ENCODE measurements at regions of chr11 and their contacts with region 1.

Region 1: DNA sequence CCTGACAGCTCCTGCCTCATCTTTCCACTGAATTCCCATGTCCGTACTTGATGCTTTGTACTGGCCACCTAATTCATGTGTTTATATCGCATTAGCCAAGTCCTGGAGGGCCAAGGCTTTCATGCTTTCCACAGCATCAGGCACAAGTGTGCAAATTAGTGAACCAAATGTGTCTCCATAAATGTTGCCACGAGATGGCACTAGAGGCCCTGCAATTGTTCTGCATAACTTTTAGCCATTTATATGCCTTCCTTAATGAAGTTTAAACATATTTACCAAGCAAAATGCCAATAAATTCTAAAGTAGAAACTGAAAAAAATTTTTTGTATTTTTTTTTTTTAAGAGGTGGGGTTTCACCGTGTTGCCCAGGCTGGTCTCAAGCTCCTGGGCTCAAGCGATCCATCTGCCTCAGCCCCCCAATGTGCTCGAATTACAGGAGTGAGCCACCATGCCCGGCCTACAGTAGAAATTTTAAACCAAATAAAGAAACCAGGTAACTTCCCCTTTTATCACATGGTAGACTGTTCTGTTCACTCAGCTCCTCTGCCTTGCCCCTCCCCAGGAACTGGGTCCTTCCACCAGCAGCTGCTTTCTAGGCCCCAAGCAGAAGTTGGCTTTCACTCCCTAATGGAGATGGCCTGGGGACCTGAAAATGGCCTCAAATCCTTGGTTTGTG is 20.8 kb upstream of the IL18BP start:
- H3K4me3 ChIP-seq: no peak overlapping the region
- H3K27ac ChIP-seq: no peak overlapping the region
- H3K4me1 ChIP-seq: no peaks in the 10 kb centered on the region
- CTCF ChIP-seq: 0 out of 2 replicates have a peak, but pooled peaks have one; percentile 33

Region 2: DNA sequence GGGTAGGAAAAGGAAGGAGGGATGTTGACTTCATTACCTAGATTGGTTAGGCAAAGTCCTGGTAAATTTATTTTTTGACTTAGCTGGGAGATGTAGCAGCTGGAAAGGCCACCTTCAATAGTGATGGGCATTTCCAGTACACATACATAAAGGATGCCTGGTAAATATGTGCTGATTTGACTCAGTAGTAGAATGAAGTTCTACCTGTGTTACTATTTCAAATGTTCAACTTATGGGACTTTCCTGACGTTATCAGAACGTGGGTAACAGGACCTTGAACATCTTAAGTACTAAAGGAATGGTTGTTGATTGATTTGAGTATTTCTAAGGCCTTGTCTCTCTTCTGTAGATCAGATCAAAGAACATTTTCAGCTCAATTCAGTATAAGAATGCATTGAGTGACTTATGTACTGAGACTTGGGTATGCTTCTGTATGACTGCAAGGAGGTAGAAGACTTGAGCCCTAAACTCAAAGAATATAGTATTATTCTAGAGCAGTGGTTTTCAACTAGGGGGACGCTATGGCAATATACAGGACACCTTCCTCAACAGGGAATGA is 21.9 kb before region 1 on chr11:
- CTCF ChIA-PET with region 1: interaction called, 12 read pairs
- POLR2A ChIA-PET with region 1: no interaction called
- H3K4me3 ChIP-seq: no peak overlapping the region
- H3K27ac ChIP-seq: no peak overlapping the region
- H3K4me1 ChIP-seq: no peaks in the 10 kb centered on the region
- CTCF ChIP-seq: no peak

Region 3: DNA sequence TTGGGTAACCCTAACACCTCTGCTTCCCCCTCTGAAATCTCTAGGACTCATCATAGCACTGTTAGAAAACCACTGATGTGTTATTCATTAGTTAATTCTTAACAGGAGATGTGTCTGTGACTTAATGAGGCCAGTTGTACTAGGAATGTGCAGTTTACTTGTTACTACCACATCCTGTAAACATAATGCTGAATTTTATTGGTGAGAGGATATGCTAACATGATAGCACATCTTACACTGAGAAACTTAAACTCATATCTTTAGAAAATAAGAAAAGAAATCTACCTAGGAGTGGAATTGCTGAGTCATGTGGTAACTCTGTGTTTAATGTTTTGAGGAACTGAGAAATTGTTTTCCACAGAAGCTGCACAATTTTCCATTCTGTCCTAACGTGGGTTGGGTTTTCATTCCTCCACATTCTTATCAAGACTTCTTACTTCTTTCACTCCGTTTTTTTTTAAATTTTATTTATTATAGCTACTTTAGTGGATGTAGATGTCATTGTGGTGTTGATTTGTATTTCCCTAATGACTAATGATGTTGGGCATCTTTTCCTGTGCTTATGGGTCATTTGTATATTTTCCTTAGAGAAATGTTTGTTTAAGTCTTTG is 15.3 kb before region 1 on chr11:
- CTCF ChIA-PET with region 1: interaction called, 39 read pairs
- POLR2A ChIA-PET with region 1: no interaction called
- H3K4me3 ChIP-seq: no peak overlapping the region
- H3K27ac ChIP-seq: no peak overlapping the region
- H3K4me1 ChIP-seq: no peaks in the 10 kb centered on the region
- CTCF ChIP-seq: no peak

Region 4: DNA sequence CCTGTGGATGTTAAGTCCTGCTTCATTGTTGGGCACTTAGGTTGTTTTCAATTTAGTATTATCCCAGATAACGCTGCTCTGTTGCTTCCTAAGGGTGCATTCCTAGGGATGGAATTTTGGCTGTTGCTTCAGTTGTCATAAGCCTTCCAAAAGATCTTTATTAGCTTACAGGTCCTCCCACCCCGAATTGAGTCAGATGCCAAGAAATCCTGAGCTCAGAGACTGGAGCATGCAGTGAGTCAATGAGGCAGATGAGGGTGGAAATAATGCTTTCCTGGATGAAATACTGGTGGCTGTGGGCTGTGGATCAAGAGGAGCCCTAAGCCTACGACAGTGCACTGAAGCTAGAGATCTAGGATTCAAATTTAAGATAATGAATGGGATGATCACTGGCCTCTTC is 10.2 kb after region 1 on chr11:
- CTCF ChIA-PET with region 1: interaction called, 28 read pairs
- POLR2A ChIA-PET with region 1: no interaction called
- H3K4me3 ChIP-seq: no peak overlapping the region
- H3K27ac ChIP-seq: no peak overlapping the region
- H3K4me1 ChIP-seq: no peaks in the 10 kb centered on the region
- CTCF ChIP-seq: no peak

Region 5: DNA sequence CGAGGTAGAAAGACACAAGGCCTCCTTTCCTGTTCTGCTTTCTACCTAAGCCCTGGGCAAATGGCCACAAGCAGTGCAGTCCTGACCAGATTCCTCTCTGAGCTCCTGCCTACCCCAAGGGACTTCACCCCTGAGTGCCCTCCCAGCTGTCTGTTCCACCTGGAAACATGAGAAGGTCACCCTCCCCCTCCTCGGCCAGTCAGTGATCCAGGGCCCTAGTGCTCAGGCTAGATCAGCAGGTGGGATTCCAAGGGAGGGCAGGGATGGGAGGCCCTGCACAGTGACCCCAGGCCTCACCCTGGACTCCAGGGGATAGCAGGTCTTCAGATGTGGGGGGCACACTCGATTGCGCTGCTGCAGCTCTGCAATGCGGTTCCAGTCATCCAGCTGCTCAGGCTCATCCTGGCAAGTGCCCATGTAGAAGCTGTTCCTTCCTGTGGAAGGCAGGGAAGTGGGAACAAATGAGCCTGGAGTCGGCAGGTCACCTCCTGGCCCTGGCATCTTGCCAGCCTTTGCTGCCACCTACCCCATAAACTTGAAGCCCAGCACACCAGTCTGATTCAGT is 27.1 kb after region 1 on chr11:
- CTCF ChIA-PET with region 1: interaction called, 10 read pairs
- POLR2A ChIA-PET with region 1: no interaction called
- H3K4me3 ChIP-seq: no peak overlapping the region
- H3K27ac ChIP-seq: no peak overlapping the region
- H3K4me1 ChIP-seq: no peaks in the 10 kb centered on the region
- CTCF ChIP-seq: no peak

Region 6: GRCh38 chr11:72091005-72091691 is 113.3 kb after region 1 on chr11:
- CTCF ChIA-PET with region 1: interaction called, 16 read pairs
- POLR2A ChIA-PET with region 1: no interaction called
- H3K4me3 ChIP-seq: no peak overlapping the region
- H3K27ac ChIP-seq: no peak overlapping the region
- H3K4me1 ChIP-seq: no peaks in the 10 kb centered on the region
- CTCF ChIP-seq: peak; percentile 85

Region 7: DNA sequence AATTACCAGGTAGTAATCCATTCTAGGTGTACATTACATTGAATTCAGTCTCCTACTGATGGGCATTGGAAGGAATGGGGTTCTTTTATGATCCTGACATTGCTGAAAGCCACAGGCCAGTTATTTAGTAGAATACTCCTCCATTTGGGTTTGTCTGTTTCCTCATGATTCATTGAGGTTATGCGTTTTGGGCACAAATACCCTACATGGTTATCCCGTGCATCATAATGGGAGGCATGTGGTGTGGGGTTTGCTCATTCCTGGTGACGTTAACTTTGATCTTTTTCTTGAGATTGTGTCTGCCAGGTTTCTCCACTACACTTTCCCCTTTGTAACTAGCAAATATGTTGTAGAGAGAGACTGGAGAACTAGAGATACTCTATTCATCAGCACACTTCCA is 163.2 kb after region 1 on chr11:
- CTCF ChIA-PET with region 1: interaction called, 20 read pairs
- POLR2A ChIA-PET with region 1: no interaction called
- H3K4me3 ChIP-seq: no peak overlapping the region
- H3K27ac ChIP-seq: no peak overlapping the region
- H3K4me1 ChIP-seq: no peaks in the 10 kb centered on the region
- CTCF ChIP-seq: no peak

Region 8: GRCh38 chr11:72308226-72309073 is 330.6 kb after region 1 on chr11:
- CTCF ChIA-PET with region 1: no interaction called
- POLR2A ChIA-PET with region 1: no interaction called
- H3K4me3 ChIP-seq: no peak overlapping the region
- H3K27ac ChIP-seq: peak overlapping the region; percentile 32; the same call in 1 of the 2 replicates
- H3K4me1 ChIP-seq: peaks cover 11% of the 10 kb centered on the region
- CTCF ChIP-seq: no peak

Region 9: DNA sequence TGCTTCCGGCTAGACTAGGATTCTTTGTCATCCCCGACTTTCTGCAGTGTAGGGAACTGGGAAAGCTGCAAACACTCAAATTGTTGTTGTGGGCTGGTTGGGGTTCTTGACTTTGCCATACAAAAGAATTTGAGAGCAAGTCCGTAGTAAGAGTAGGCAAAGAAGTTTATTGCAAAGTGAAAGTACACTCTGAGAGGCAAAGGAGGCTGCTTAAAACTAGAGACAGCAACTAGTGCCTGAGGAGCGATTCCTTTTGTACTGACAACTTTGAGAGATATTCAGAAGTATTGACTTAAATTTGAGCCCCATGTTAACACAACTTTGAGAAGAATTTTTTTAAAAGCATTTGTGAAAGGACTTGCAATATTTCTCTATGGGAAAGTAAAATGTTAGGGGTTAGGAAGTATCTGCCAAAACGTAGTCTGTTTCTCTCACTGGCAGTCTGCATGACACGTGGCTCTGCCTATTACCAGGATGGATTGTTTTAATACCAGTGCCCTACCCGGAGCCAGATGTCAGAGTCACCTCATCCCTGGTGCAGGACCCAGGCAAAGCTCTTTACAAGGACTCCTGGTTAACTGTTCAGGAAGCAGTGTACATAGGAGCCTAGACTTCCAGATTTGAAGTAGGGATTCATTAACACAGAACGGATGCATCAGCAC is 541.5 kb after region 1 on chr11:
- CTCF ChIA-PET with region 1: no interaction called
- POLR2A ChIA-PET with region 1: no interaction called
- H3K4me3 ChIP-seq: no peak overlapping the region
- H3K27ac ChIP-seq: no peak overlapping the region
- H3K4me1 ChIP-seq: no peaks in the 10 kb centered on the region
- CTCF ChIP-seq: no peak